Vagina (tissue), 2 donors: ENCODE measurements at regions of chr3 and their contacts with region 1.

Region 1: GRCh38 chr3:30440147-30440604 is 166.2 kb upstream of the TGFBR2 start:
- DNase-seq: no peak
- H3K4me3 ChIP-seq: no peak overlapping the region
- H3K27ac ChIP-seq: peak overlapping the region; percentile 42
- H3K4me1 ChIP-seq: no peaks in the 10 kb centered on the region
- H3K27me3 ChIP-seq: no peaks in the 10 kb centered on the region
- CTCF ChIP-seq: no peak
- POLR2A ChIP-seq: no peak

Region 2: GRCh38 chr3:30496066-30496966 is 56.1 kb after region 1 on chr3:
- intact Hi-C with region 1: loop called (anchors 10 kb)
- DNase-seq: no peak
- H3K4me3 ChIP-seq: no peak overlapping the region
- H3K27ac ChIP-seq: peak overlapping the region; percentile 82
- H3K4me1 ChIP-seq: peaks cover 53% of the 10 kb centered on the region
- H3K27me3 ChIP-seq: no peaks in the 10 kb centered on the region
- CTCF ChIP-seq: no peak
- POLR2A ChIP-seq: no peak